ENCODE measurements at regions of chr1 and their contacts with region 1.

Region 1: GRCh38 chr1:92317836-92318493 is 19.1 kb downstream of the RPAP2 start:
- DNase-seq: peak; percentile 40
- H3K4me3 Mint-ChIP-seq: peak overlapping the region; percentile 28
- H3K27ac Mint-ChIP-seq: peak overlapping the region; percentile 79
- H3K4me1 Mint-ChIP-seq: peaks cover 57% of the 10 kb centered on the region
- H3K27me3 Mint-ChIP-seq: no peaks in the 10 kb centered on the region

Region 2: GRCh38 chr1:92298573-92299476 is 19.1 kb before region 1 on chr1 and contains the starts of genes GLMN and RPAP2:
- CTCF ChIA-PET with region 1: interaction called, 14 read pairs
- POLR2A ChIA-PET with region 1: interaction called, 3 read pairs
- DNase-seq: peak; percentile 70
- H3K4me3 Mint-ChIP-seq: peak within 1 kb of the TSS; percentile 98
- H3K27ac Mint-ChIP-seq: peak within 1 kb of the TSS; percentile 94
- H3K4me1 Mint-ChIP-seq: peaks cover 51% of the 10 kb centered on the region
- H3K27me3 Mint-ChIP-seq: no peaks in the 10 kb centered on the region
- total RNA-seq, gene GLMN: 14.2 to 18.2 TPM
- total RNA-seq, gene RPAP2: 28.1 to 35.3 TPM